Uterus (tissue), 4 donors: ENCODE measurements at regions of chr5 and their contacts with region 1.

Region 1: DNA sequence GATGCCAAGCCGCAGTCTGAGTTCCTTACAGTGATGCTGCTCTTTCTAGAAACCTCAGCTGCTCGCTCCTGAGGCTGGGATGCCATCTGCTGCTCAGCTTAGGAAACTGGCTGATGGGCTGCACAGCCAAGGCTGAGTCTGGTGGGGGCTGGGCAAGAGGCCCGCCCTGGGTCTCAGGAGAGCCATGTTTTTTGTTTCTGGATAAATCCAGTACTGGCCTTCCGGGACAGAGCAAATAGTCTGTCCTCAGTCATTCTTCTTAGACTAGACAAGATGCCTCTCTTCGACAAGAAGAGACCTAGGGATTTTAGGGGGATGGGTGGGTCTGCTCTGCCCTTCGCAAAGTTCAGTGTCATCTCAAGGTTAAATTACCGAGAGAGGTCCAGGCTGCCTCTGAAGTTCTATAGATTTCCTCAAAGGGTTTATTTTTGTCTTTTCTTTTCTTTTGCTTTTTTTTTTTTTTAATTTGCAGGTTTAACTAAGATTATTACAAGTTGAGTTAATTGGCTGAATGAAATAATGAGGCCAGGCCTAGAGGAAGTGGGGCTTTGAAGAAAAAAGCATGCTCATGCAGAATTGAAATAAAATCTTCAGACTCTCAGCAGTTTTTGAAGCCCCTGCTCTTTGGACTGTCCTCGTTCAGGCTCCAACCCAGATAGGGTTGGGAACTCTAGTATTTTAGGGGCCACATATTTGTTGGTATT is 30.6 kb upstream of the MATR3 start:
- DNase-seq: peak; percentile 88 to 90
- H3K4me3 ChIP-seq: no peak overlapping the region
- H3K27ac ChIP-seq: peak overlapping the region; percentile 54 to 55
- H3K4me1 ChIP-seq: no peaks in the 10 kb centered on the region
- H3K27me3 ChIP-seq: no peaks in the 10 kb centered on the region
- CTCF ChIP-seq: peak; percentile 93 to 98 (median 94)
- POLR2A ChIP-seq: no peak

Region 2: GRCh38 chr5:138583984-138584637 is 678.8 kb before region 1 on chr5:
- intact Hi-C with region 1: loop called (anchors 10 kb)
- DNase-seq: no peak
- H3K4me3 ChIP-seq: no peak overlapping the region
- H3K27ac ChIP-seq: no peak overlapping the region
- H3K4me1 ChIP-seq: no peaks in the 10 kb centered on the region
- H3K27me3 ChIP-seq: no peaks in the 10 kb centered on the region
- CTCF ChIP-seq: no peak
- POLR2A ChIP-seq: no peak

Region 3: DNA sequence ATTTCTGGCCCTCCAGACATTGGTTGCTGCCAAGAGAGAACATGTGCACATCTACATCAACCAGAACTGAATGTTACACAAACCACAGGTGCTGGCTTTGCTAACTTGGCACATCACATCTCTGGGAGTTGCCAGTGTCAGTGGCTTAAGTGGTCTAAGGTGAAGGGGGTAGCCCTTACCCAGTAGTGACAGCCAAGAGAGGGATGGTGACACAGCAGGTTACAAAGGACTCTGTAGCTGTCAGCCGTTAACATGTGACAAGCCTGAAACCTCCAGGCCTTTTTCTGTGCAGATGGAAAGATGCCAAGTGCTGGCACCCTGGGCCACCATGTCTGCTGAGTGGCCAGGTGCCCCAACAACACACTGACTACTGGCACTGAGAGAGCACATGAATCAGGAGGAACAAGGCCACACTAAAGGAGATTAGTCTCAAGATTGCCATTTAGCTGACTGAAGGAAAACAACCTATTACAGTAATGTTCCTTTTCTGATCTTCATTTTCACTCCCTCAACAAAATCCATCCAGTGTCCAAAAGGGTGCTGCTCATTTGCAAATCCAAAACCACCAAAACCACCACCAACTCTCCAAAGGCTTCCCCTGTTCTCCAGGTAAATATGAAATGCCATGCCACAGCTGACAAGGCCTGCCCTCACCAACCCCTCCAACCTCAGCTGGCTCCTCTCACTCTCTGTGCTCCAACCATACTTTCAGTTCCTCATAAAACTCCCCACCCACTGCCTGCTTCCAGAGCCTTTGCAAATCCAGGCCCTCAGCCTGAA is 84.9 kb before region 1 on chr5:
- intact Hi-C with region 1: no loop called
- DNase-seq: no peak
- H3K4me3 ChIP-seq: no peak overlapping the region
- H3K27ac ChIP-seq: peak overlapping the region; percentile 75 to 90
- H3K4me1 ChIP-seq: peaks cover 0 to 23% of the 10 kb centered on the region in 2 donors
- H3K27me3 ChIP-seq: no peaks in the 10 kb centered on the region
- CTCF ChIP-seq: no peak
- POLR2A ChIP-seq: no peak